Caco-2 (cell line): ENCODE measurements at regions of chr1 and their contacts with region 1.

Region 1: DNA sequence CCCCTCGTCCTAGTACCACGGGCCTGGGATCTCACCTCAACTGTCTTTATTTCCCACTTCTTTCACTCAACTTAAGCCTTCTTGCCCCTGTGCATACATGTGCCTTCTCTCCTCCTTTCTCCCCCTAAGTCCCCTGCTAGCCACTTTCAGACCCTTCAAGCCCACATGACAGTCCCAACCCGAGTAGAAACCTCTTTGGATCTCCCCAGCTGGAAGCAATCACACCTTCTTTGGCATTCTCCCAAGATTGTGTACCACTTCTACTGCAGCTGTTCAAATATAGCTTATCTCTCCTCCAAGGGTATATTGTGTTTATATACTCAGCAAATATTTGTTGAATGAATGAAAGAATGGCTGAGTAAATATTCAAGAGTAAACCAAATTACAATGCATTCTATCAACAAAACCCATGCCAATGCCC is 68.8 kb downstream of the NIBAN1 start:
- DNase-seq: peak; percentile 63 to 72
- H3K4me3 ChIP-seq: no peak overlapping the region
- H3K4me3 Mint-ChIP-seq: peak overlapping the region; percentile 29
- H3K27ac Mint-ChIP-seq: peak overlapping the region; percentile 85
- H3K4me1 ChIP-seq: peaks cover 31% of the 10 kb centered on the region
- H3K4me1 Mint-ChIP-seq: peaks cover 17% of the 10 kb centered on the region
- H3K27me3 ChIP-seq: no peaks in the 10 kb centered on the region
- H3K27me3 Mint-ChIP-seq: no peaks in the 10 kb centered on the region
- CTCF ChIP-seq: no peak

Region 2: DNA sequence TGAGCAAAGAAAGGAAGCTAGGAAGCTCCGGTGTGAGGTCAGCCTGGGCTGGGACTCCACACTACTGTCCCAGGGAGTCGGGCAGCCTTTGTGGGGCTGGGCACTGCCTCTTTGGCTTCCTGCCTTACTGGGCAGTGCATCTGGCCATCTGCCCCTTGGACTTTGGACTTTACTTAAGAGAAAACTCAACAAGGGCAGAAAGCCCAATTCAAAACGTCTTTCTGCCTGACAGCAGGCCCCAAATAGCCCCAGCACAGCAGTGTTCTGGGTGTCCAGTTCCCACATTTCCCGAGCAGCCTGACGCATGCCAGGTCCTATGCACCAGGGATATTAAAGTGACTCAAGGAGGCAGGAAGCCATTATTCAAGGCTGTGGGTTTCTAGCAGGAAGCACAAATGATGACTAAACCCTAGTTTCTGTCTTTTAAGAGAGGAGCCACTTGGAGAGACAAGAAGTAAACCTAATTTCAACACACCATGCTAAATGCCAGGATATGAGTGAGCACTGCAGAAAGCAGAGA is 113.0 kb before region 1 on chr1:
- CTCF ChIA-PET with region 1: no interaction called
- POLR2A ChIA-PET with region 1: no interaction called
- intact Hi-C with region 1: no loop called
- DNase-seq: peak in 1 of 2 experiments; percentile 10
- H3K4me3 ChIP-seq: no peak overlapping the region
- H3K4me3 Mint-ChIP-seq: no peak overlapping the region
- H3K27ac Mint-ChIP-seq: no peak overlapping the region
- H3K4me1 ChIP-seq: peaks cover 8% of the 10 kb centered on the region
- H3K4me1 Mint-ChIP-seq: peaks cover 15% of the 10 kb centered on the region
- H3K27me3 ChIP-seq: no peaks in the 10 kb centered on the region
- H3K27me3 Mint-ChIP-seq: no peaks in the 10 kb centered on the region
- CTCF ChIP-seq: no peak

Region 3: GRCh38 chr1:184838489-184838951 is 67.0 kb before region 1 on chr1:
- CTCF ChIA-PET with region 1: no interaction called
- POLR2A ChIA-PET with region 1: no interaction called
- intact Hi-C with region 1: loop called (anchors 5 kb)
- DNase-seq: no peak
- H3K4me3 ChIP-seq: no peak overlapping the region
- H3K4me3 Mint-ChIP-seq: no peak overlapping the region
- H3K27ac Mint-ChIP-seq: no peak overlapping the region
- H3K4me1 ChIP-seq: peaks cover 9% of the 10 kb centered on the region; the same call in 1 of the 2 replicates
- H3K4me1 Mint-ChIP-seq: peaks cover 17% of the 10 kb centered on the region
- H3K27me3 ChIP-seq: no peaks in the 10 kb centered on the region
- H3K27me3 Mint-ChIP-seq: no peaks in the 10 kb centered on the region
- CTCF ChIP-seq: no peak

Region 4: DNA sequence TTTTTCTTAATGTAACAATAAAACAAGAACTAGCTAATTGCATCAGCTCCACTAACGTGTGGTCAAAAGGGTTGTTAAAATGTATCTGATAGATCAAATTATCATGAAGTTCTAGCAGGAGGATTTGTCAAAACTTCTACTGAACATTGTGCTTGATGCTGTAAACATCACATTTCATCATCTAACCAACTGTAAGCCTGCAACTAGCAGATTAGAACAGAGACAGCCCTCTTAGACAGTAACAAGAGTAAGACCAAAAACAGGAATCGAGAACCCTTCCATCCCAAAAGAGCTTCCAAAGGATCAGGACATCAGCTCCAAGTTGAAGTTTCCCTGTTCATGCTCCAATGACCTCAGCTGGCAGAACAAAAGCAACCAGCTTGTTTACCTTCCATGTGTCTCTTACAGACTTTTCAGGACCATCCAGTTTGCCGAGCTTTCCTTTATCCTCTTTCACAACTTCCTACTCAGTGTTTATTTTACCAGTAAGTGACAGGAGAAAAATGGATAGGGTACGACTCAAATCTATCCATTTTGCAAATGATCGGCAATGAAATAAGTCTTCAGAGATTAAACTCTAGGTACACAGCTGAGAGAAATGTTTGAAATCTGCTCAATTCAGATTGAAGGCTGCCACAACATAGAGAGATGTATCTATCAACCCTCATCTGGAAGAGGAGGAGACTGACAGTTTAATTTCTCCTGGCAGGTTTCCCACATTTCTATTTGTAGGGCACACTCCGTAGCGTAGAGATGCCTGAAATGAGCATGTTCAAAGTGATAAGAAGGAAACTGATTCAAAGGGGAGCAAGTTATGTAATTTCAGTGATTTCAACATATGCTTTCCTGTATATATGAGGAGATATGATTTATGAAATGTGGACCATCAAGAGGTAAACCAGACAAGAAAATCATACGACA is 24.5 kb after region 1 on chr1:
- CTCF ChIA-PET with region 1: no interaction called
- POLR2A ChIA-PET with region 1: no interaction called
- intact Hi-C with region 1: loop called (anchors 1 kb)
- DNase-seq: peak in 1 of 2 experiments; percentile 69
- H3K4me3 ChIP-seq: no peak overlapping the region
- H3K4me3 Mint-ChIP-seq: peak overlapping the region; percentile 52
- H3K27ac Mint-ChIP-seq: peak overlapping the region; percentile 22
- H3K4me1 ChIP-seq: peaks cover 10% of the 10 kb centered on the region; the same call in 1 of the 2 replicates
- H3K4me1 Mint-ChIP-seq: peaks cover 13% of the 10 kb centered on the region
- H3K27me3 ChIP-seq: no peaks in the 10 kb centered on the region
- H3K27me3 Mint-ChIP-seq: no peaks in the 10 kb centered on the region
- CTCF ChIP-seq: no peak

Region 5: GRCh38 chr1:184973272-184974055 is 68.0 kb after region 1 on chr1:
- CTCF ChIA-PET with region 1: no interaction called
- POLR2A ChIA-PET with region 1: interaction called, 7 read pairs
- intact Hi-C with region 1: loop called (anchors 1 kb)
- DNase-seq: peak; percentile 35 to 62
- H3K4me3 ChIP-seq: peak overlapping the region; percentile 33
- H3K4me3 Mint-ChIP-seq: peak overlapping the region; percentile 82
- H3K27ac Mint-ChIP-seq: peak overlapping the region; percentile 94
- H3K4me1 ChIP-seq: 0 out of 2 replicates have a peak, but pooled peaks cover 6% of the 10 kb centered on the region
- H3K4me1 Mint-ChIP-seq: peaks cover 12% of the 10 kb centered on the region
- H3K27me3 ChIP-seq: no peaks in the 10 kb centered on the region; the same call in 1 of the 2 replicates
- H3K27me3 Mint-ChIP-seq: peaks cover 2% of the 10 kb centered on the region
- CTCF ChIP-seq: no peak